ENCODE measurements at regions of chr17 and their contacts with region 1.

Region 1: DNA sequence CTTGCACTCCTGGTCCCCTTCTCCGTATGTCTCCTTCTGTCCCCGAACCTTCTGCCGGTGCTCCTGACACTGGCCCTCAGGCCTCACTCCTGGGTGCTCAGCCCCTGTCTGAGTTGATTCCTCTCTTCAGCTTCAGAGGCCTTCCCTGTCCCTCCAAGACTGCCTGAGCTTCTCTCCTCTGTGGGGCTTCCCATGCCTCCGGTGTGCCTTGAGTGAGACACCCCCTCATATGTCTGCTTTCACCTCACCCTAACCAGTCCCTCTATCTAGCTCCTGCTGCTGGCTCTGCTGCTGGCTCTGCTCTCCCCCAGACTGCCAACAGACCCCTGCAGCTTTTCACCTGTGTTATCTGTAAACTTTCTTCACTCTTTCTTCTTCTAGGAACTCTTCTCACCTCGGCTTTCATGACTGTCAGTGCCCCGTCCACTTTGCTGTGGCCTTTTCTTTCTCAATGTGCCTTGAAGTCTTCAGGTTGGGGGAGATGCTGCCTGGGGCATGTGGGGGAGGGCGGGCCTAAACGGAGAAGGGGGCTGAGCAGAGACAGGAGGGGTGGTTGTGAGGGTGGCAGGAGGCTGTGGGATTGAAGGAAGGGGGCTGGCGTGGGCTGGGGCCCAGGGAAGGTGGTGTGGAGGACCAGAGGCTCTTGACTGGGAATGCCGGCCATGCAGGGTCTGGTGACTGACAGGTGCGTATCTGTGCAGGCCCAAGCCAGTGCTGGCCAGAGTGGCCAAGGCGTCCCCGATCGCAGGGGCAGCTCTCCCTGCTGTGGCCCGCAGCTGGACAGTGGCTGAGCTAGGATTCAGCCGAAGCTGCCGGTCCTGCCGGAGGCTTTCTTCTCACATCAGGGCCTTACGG is 81.3 kb downstream of the METRNL start:
- DNase-seq: no peak
- ATAC-seq: no peak
- H3K4me3 ChIP-seq: no peak overlapping the region
- H3K27ac ChIP-seq: no peak overlapping the region
- H3K4me1 ChIP-seq: peaks cover 10% of the 10 kb centered on the region
- H3K27me3 ChIP-seq: peaks cover 25% of the 10 kb centered on the region
- CTCF ChIP-seq: no peak
- POLR2A ChIP-seq: no peak
- RAD21 ChIP-seq: no peak

Region 2: GRCh38 chr17:83138820-83139219 is 21.9 kb before region 1 on chr17:
- CTCF ChIA-PET with region 1: no interaction called
- POLR2A ChIA-PET with region 1: no interaction called
- dilution Hi-C with region 1: no loop called
- in situ Hi-C with region 1: no loop called
- intact Hi-C with region 1: loop called (anchors 2 kb)
- DNase-seq: no peak
- ATAC-seq: no peak
- H3K4me3 ChIP-seq: no peak overlapping the region
- H3K27ac ChIP-seq: no peak overlapping the region
- H3K4me1 ChIP-seq: no peaks in the 10 kb centered on the region
- H3K27me3 ChIP-seq: peaks cover 35% of the 10 kb centered on the region
- CTCF ChIP-seq: no peak
- POLR2A ChIP-seq: no peak
- RAD21 ChIP-seq: no peak

Region 3: DNA sequence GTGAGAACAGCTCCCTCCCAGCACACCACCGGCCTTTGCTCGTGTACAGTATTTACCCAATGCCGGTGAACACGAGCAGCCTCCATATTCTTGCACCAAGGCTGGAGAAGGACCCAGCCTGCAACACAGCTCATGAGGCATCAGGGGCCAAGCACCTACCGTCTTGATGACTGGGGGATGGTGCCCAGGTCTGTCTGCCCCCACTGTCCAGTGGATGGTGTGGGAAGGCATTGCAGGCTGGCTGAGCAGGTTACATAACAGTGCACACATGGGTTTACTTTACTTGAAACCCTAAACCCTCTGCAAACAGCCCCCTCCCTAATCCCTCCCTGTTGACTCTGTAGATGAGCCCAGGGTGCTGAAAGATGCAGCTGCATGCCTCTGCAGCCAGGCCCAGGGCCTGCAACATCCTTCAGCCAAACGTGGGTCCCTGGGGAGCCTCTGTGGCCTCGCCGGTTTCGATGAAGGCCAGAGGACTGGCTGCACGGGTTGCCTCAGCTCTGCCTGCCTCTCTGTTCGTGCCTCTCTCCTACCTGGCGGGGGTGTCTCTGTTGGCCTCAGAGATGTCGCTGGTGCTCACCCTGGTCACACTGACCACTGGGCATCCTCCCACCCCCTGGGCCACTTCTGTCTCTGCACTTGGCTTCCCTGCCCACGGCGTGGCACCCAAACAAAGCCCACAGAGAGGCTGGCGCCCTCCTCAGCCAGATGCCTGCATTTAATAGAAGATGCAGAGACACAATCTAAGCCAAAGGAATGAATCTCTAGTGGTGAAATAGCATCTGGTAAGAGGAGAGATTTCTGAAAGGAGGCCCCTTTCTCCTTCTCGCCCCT is 13.8 kb after region 1 on chr17:
- CTCF ChIA-PET with region 1: no interaction called
- POLR2A ChIA-PET with region 1: no interaction called
- dilution Hi-C with region 1: no loop called
- in situ Hi-C with region 1: no loop called
- intact Hi-C with region 1: no loop called
- DNase-seq: peak; percentile 21
- ATAC-seq: peak; percentile 83
- H3K4me3 ChIP-seq: no peak overlapping the region
- H3K27ac ChIP-seq: no peak overlapping the region
- H3K4me1 ChIP-seq: no peaks in the 10 kb centered on the region; the same call in 1 of the 2 replicates
- H3K27me3 ChIP-seq: peaks cover 33% of the 10 kb centered on the region
- CTCF ChIP-seq: no peak
- POLR2A ChIP-seq: no peak
- RAD21 ChIP-seq: no peak

Region 4: GRCh38 chr17:83189044-83190003 is 28.7 kb after region 1 on chr17:
- CTCF ChIA-PET with region 1: no interaction called
- POLR2A ChIA-PET with region 1: no interaction called
- dilution Hi-C with region 1: no loop called
- in situ Hi-C with region 1: no loop called
- intact Hi-C with region 1: loop called (anchors 1 kb)
- DNase-seq: peak; percentile 90
- ATAC-seq: peak; percentile 96
- H3K4me3 ChIP-seq: no peak overlapping the region
- H3K27ac ChIP-seq: no peak overlapping the region
- H3K4me1 ChIP-seq: peaks cover 16% of the 10 kb centered on the region
- H3K27me3 ChIP-seq: peaks cover 30% of the 10 kb centered on the region
- CTCF ChIP-seq: no peak
- POLR2A ChIP-seq: no peak
- RAD21 ChIP-seq: no peak